ENCODE measurements at regions of chr12 and their contacts with region 1.

Region 1: DNA sequence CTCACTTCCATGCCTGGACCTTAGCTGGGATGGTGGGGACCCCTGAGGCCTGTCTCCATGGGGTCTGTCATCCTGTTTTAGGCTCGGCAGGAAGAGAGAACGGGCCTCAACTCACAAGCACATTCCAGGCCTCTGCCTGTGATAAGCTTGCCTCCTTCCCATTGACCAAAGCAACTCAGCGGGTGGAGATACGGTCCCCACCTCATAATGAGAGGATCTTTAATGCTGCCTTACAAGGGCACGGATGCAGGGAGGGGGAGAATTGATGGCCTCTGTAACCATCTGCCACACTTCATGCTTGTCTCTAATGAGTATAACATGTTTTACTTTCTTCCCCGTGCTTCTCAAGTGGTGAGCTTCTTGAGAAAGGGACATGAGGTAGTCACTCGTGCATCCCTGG is 50.0 kb downstream of the GLT1D1 start:
- DNase-seq: no peak
- H3K4me3 ChIP-seq: no peak overlapping the region
- H3K27ac ChIP-seq: no peak overlapping the region
- H3K4me1 ChIP-seq: no peaks in the 10 kb centered on the region
- H3K27me3 ChIP-seq: no peaks in the 10 kb centered on the region
- CTCF ChIP-seq: no peak
- POLR2A ChIP-seq: no peak

Region 2: GRCh38 chr12:128715485-128715884 is 187.8 kb before region 1 on chr12:
- intact Hi-C with region 1: loop called (anchors 5 kb)
- DNase-seq: no peak
- H3K4me3 ChIP-seq: no peak overlapping the region
- H3K27ac ChIP-seq: no peak overlapping the region
- H3K4me1 ChIP-seq: no peaks in the 10 kb centered on the region
- H3K27me3 ChIP-seq: no peaks in the 10 kb centered on the region
- CTCF ChIP-seq: no peak
- POLR2A ChIP-seq: no peak

Region 3: GRCh38 chr12:128920468-128920867 is 17.2 kb after region 1 on chr12:
- intact Hi-C with region 1: no loop called
- DNase-seq: peak in 1 of 2 donors; percentile 27
- H3K4me3 ChIP-seq: no peak overlapping the region
- H3K27ac ChIP-seq: no peak overlapping the region
- H3K4me1 ChIP-seq: no peaks in the 10 kb centered on the region
- H3K27me3 ChIP-seq: no peaks in the 10 kb centered on the region
- CTCF ChIP-seq: no peak
- POLR2A ChIP-seq: no peak

Measured in breast epithelium (tissue), 4 donors.